WTC11 (cell line): ENCODE measurements at regions of chr7 and their contacts with region 1.

Region 1: DNA sequence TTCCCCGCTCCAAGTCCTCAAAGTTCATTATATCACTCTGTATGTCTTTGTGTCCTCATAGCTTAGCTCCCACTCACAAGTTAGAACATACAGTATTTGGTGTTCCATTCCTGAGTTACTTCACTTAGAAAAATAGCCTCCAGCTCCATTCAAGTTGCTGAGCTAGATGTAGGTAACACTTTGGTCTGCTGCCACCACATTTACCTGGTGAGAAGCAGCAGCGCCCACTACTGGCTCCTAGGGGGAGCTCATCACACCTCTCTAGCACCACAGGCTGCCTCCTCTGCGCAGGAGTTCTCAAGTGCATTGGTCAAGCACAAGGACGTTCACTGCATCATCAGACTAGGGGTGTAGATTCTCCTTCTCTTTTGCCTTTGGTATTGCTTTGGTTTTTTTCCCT is 530.9 kb upstream of the AUTS2 start:
- DNase-seq: peak; percentile 74
- ATAC-seq: peak; percentile 87
- H3K4me3 Mint-ChIP-seq: no peak overlapping the region
- H3K27ac Mint-ChIP-seq: no peak overlapping the region
- H3K4me1 Mint-ChIP-seq: no peaks in the 10 kb centered on the region
- H3K27me3 Mint-ChIP-seq: peaks cover 8% of the 10 kb centered on the region
- CTCF ChIP-seq: peak; percentile 77

Region 2: GRCh38 chr7:69115788-69116187 is 48.4 kb after region 1 on chr7:
- CTCF ChIA-PET with region 1: interaction called, 11 read pairs
- POLR2A ChIA-PET with region 1: no interaction called
- DNase-seq: no peak
- ATAC-seq: no peak
- H3K4me3 Mint-ChIP-seq: no peak overlapping the region
- H3K27ac Mint-ChIP-seq: no peak overlapping the region
- H3K4me1 Mint-ChIP-seq: no peaks in the 10 kb centered on the region
- H3K27me3 Mint-ChIP-seq: peaks cover 7% of the 10 kb centered on the region
- CTCF ChIP-seq: no peak